Activated CD4-positive, alpha-beta memory T cell treated with anti-CD3 and anti-CD28 coated beads, Interleukin-2, amount 10 ng/mL, durations not matched to agents 7 days and 5 days (primary cell): ENCODE measurements at regions of chr19 and their contacts with region 1.

Region 1: DNA sequence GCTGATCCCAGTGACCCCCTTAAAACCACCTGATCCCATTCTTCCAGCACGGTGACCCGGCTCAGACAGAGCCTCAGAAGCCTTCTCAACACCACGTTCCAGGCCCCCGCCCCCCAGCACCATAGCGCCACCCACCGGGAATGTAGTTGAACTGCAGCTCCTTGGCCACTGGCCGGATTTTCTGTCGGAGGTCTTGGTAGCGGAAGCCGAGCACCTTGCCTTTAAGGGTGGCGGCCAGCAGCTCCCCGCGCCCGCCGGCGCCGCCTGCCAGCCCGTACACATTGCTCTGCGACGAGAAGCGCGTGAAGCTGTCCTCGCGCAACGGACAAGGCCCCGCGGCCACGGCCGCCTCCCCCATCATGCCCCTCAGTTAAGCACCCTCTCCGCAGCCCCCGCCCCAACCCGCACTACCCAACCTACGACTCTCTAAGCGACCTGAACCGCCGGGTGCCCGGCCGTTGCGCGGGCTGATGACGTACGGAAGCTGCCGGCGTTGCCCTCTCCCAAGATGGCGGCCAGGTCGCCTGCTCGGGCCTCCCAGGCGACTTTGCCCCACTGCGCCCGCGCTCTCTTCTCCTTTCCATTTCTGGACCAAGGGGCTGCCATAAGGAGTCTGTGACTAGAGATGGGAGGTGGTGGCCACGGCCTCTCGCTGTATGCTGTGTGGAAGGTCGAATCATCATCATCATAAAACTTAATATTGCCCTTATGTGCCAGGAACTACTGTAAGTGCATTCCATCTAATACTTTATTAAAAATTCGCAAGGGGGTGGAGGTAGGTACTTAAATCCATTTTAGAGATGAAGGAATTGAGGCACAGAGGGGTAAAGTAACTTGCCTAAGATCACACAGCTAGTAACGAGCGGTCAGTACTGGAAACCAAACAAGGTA is at the start of gene KPTN:
- DNase-seq: peak; percentile 91
- H3K4me3 Mint-ChIP-seq: peak within 1 kb of the TSS; percentile 96
- H3K27ac Mint-ChIP-seq: peak within 1 kb of the TSS; percentile 94
- H3K4me1 Mint-ChIP-seq: peaks cover 34% of the 10 kb centered on the region
- H3K27me3 Mint-ChIP-seq: no peaks in the 10 kb centered on the region
- total RNA-seq, gene KPTN: 6.6 to 7.7 TPM

Region 2: DNA sequence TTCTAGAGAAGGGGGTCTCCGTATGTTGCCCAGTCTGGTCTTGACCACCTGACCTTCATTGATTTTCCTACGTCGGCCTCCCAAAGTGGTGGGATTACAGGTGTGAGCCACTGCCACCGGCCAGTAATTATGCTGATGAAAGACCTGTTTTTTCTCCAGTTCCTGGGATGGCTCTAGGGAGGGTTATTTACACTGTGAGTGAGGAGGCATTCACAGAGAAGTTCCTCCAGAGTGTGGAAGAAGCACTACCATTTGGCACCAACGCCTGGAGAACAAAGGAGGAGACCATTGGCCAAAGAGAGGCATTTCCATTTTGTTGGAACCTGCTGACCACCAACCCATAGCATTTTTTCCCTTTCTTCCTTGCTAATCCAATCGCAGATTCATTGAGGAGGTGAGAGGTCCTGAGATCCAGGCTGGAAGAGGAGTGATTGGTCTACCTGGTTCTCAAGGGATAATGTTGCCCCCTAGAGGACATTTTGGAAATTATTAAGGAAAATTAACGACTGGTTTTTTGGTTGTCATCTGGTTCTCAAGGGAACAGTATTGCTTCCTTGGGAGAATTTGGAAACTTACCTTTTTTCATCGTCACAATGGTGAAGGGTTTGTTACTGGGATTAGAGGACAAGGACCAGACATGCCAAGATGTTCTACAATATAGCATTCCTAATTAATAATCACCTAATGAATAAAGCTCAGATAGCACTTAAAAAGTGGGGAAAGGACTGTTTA is 358.9 kb before region 1 on chr19:
- CTCF ChIA-PET with region 1: no interaction called
- POLR2A ChIA-PET with region 1: no interaction called
- DNase-seq: peak; percentile 22
- H3K4me3 Mint-ChIP-seq: no peak overlapping the region
- H3K27ac Mint-ChIP-seq: no peak overlapping the region
- H3K4me1 Mint-ChIP-seq: peaks cover 7% of the 10 kb centered on the region
- H3K27me3 Mint-ChIP-seq: peaks cover 2% of the 10 kb centered on the region

Region 3: DNA sequence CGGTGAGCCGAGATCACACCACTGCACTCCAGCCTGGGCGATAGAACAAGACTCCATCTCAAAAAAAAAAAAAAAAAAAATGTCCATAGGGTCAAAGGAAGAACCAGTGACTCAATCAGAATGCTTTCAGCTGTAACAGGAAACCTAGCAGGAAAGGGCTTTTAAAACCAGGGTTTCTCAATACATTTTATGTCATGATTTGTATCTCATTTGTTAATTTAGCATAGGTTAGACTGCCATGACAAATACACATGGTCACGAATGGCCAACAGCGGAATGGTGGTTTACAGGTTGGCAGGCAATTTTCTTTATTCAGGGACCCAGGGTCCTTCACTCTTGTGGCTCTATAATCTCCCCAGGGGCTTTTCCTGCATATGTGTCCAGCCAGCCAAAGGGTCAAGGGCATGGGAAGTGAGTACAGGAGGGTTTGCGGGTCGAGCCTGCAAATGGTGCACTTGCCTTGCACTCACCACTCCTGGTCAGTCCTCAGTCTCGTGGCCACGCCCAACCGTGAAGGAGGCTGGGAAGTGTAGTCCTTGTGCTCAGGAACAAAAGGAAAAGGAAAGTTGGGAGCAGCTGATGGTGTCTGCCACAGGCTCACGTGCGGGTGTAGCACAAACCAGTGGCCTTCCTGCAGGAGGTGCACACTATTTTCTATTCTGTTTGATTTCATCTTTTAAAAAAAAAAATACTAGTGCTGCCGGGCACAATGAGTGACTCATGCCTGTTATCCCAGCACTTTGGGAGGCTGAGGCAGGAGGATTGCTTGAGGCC is 120.1 kb before region 1 on chr19:
- CTCF ChIA-PET with region 1: no interaction called
- POLR2A ChIA-PET with region 1: no interaction called
- DNase-seq: no peak
- H3K4me3 Mint-ChIP-seq: no peak overlapping the region
- H3K27ac Mint-ChIP-seq: no peak overlapping the region
- H3K4me1 Mint-ChIP-seq: peaks cover 3% of the 10 kb centered on the region
- H3K27me3 Mint-ChIP-seq: no peaks in the 10 kb centered on the region

Region 4: GRCh38 chr19:47377208-47377701 is 106.8 kb before region 1 on chr19:
- CTCF ChIA-PET with region 1: no interaction called
- POLR2A ChIA-PET with region 1: no interaction called
- DNase-seq: no peak
- H3K4me3 Mint-ChIP-seq: no peak overlapping the region
- H3K27ac Mint-ChIP-seq: no peak overlapping the region
- H3K4me1 Mint-ChIP-seq: peaks cover 11% of the 10 kb centered on the region
- H3K27me3 Mint-ChIP-seq: no peaks in the 10 kb centered on the region

Region 5: GRCh38 chr19:47391510-47392223 is 92.4 kb before region 1 on chr19:
- CTCF ChIA-PET with region 1: no interaction called
- POLR2A ChIA-PET with region 1: no interaction called
- DNase-seq: peak; percentile 86
- H3K4me3 Mint-ChIP-seq: no peak overlapping the region
- H3K27ac Mint-ChIP-seq: no peak overlapping the region
- H3K4me1 Mint-ChIP-seq: peaks cover 6% of the 10 kb centered on the region
- H3K27me3 Mint-ChIP-seq: peaks cover 6% of the 10 kb centered on the region

Region 6: DNA sequence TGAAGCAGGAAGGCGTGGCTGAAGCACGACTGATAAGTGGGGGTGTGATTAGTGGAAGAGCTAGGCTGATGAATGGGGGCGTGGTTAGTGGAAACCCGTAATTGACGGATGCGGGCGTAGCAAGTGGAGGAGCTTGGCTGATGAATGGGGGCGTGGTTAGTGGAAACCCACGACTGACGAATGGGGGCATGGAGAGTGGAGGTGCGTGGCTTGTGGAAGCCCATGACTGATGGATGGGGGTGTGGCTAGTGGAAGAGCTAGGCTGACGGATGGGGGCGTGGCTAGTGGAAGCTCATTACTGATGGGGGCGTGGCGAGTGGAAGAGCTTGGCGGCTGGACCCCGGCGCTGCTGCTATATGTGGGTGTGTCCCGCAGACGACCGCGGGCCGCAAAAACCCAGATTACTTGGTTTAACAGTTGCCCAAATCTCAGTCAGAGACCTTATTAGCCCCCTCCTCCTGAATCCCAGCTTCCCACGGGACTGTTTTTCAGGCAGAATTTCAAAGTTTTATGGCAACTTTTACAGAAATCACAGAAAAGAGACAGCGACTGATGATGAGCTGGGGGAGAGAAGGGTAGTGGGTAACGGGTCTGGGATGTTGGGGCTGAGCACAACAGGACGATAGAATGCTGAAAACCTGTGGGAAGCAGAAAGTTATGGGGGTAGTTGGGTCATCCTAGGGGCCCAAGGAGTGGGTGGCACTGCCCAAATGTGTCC is 55.7 kb before region 1 on chr19:
- CTCF ChIA-PET with region 1: interaction called, 21 read pairs
- POLR2A ChIA-PET with region 1: interaction called, 4 read pairs
- DNase-seq: peak; percentile 94
- H3K4me3 Mint-ChIP-seq: no peak overlapping the region
- H3K27ac Mint-ChIP-seq: no peak overlapping the region
- H3K4me1 Mint-ChIP-seq: peaks cover 29% of the 10 kb centered on the region
- H3K27me3 Mint-ChIP-seq: peaks cover 31% of the 10 kb centered on the region

Region 7: GRCh38 chr19:47494729-47495128 is 10.7 kb after region 1 on chr19:
- CTCF ChIA-PET with region 1: interaction called, 16 read pairs
- POLR2A ChIA-PET with region 1: interaction called, 4 read pairs
- DNase-seq: no peak
- H3K4me3 Mint-ChIP-seq: no peak overlapping the region
- H3K27ac Mint-ChIP-seq: no peak overlapping the region
- H3K4me1 Mint-ChIP-seq: no peaks in the 10 kb centered on the region
- H3K27me3 Mint-ChIP-seq: no peaks in the 10 kb centered on the region

Region 8: GRCh38 chr19:47600246-47601179 is 116.5 kb after region 1 on chr19:
- CTCF ChIA-PET with region 1: no interaction called
- POLR2A ChIA-PET with region 1: interaction called, 10 read pairs
- DNase-seq: peak; percentile 100
- H3K4me3 Mint-ChIP-seq: peak overlapping the region; percentile 85
- H3K27ac Mint-ChIP-seq: peak overlapping the region; percentile 89
- H3K4me1 Mint-ChIP-seq: peaks cover 48% of the 10 kb centered on the region
- H3K27me3 Mint-ChIP-seq: peaks cover 5% of the 10 kb centered on the region

Region 9: DNA sequence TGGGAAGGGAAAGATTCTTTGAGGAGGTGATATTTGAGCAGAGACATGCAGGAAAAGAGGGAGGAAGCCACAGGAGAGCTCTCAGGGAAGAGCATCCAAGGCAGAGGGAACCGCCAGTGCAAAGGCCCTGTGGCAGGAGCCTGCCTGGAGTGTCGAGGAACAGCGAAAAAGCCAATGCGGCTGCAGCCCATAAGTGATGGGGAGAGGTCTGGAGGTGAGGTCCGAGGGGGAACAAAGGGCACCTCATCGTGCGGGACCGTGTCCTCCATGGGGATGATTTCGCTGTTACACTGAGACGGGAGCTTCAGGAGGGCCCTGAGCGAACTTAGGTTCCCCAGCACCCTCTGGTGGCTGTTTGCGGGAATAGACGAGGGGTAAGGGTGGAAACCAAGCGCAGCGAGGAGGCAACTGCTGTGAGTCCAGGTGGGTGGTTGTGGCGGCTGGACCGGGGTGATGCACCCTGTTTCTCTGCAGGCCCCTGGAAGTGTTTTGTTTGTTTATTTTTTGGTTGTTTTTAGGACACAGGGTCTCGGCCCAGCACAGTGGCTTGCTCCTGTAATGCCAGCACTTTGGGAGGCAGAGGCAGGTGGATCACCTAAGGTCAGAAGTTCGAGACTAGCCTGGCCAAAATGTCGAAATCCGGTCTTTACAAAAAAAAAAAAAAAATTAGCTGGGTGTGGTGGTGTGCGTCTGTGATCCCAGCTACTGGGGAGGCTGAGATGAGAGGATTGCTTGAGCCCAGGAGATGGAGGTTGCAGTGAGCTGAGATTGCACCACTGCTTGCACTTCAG is 223.3 kb after region 1 on chr19:
- CTCF ChIA-PET with region 1: interaction called, 12 read pairs
- POLR2A ChIA-PET with region 1: no interaction called
- DNase-seq: peak; percentile 82
- H3K4me3 Mint-ChIP-seq: no peak overlapping the region
- H3K27ac Mint-ChIP-seq: no peak overlapping the region
- H3K4me1 Mint-ChIP-seq: peaks cover 6% of the 10 kb centered on the region
- H3K27me3 Mint-ChIP-seq: peaks cover 8% of the 10 kb centered on the region